Activated B cell treated with CpG ODN at 0.5 μM for 24 hours (primary cell): ENCODE measurements at regions of chr3 and their contacts with region 1.

Region 1: GRCh38 chr3:32758375-32758753 is 59.4 kb upstream of the TRIM71 start:
- DNase-seq: no peak
- ATAC-seq: no peak
- H3K4me3 Mint-ChIP-seq: no peak overlapping the region
- H3K27ac Mint-ChIP-seq: no peak overlapping the region
- H3K4me1 Mint-ChIP-seq: no peaks in the 10 kb centered on the region
- H3K27me3 Mint-ChIP-seq: no peaks in the 10 kb centered on the region
- CTCF ChIP-seq: no peak

Region 2: DNA sequence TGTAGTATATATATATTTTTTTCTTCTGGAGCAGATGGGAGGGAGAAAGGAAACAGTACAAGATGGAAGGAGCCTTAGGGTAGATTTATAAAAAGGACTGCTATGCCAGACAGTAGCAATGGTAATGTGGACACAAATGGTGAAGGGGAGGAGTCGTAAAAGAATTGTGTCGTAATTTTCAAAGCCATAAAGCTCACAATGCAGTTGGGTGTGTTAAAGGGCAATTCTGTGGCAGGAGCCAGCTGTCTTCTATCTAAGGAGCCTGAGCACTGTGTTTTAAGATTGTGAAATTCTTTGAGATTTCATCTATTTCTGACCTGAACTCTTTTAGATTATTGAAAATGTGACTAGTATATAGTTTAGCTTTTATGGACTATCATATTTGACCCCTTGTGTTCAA is 14.4 kb before region 1 on chr3:
- CTCF ChIA-PET with region 1: no interaction called
- POLR2A ChIA-PET with region 1: interaction called, 10 read pairs
- intact Hi-C with region 1: no loop called
- DNase-seq: no peak
- ATAC-seq: no peak
- H3K4me3 Mint-ChIP-seq: no peak overlapping the region
- H3K27ac Mint-ChIP-seq: no peak overlapping the region
- H3K4me1 Mint-ChIP-seq: no peaks in the 10 kb centered on the region
- H3K27me3 Mint-ChIP-seq: no peaks in the 10 kb centered on the region
- CTCF ChIP-seq: no peak